Activated naive CD4-positive, alpha-beta T cell treated with anti-CD3 and anti-CD28 coated beads, Interleukin-2, amount 10 ng/mL, durations not matched to agents 7 days and 5 days (primary cell): ENCODE measurements at regions of chr17 and their contacts with region 1.

Region 1: GRCh38 chr17:79045842-79046196 is 21.9 kb downstream of the C1QTNF1 start:
- DNase-seq: peak; percentile 74
- H3K4me3 Mint-ChIP-seq: no peak overlapping the region
- H3K27ac Mint-ChIP-seq: no peak overlapping the region
- H3K4me1 Mint-ChIP-seq: no peaks in the 10 kb centered on the region
- H3K27me3 Mint-ChIP-seq: peaks cover 22% of the 10 kb centered on the region

Region 2: DNA sequence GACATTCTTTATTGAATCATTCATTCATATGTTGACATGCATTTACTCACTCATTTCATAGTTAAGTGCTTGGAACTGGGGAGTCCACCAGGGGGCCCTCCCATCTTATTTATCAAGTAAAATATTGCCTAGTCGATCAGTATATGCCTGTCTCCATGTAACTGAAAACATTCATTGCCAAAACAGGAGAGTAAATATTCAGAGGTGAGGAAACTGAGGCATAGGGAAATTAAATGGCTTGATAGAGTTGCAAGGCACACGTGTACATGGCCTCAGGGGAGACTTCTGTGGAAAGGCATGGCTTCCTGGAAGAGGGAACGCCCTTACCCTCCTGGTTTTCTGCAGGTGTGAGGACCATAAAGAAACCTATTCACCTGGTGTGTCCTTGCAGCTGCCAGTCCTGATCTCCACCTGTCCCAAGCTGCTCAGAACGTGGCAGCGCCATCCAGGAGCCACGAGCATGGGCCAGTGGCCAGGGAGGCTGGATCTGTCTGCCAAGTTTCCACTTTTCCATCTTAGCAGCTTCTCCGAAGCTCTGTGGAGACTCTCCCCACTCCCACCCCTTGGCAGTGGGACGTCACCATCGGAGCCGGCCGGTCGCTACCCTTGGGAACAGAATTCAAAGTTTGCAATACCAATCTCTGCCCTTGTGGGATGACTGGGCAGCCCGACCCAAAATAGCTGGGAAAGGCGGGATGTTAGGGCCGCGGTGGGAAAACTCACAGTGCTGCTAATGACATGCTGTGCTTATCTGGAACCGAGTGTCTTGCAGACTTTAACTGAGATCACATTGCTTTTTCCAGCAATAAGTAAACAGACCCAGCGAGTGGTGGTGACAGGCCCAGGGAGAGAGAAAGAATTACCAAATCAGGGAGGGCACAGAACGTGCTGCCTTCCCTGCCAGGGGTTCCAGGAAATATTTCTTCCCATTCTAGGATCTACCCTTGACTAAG is 25.9 kb before region 1 on chr17:
- CTCF ChIA-PET with region 1: interaction called, 28 read pairs
- DNase-seq: peak; percentile 75
- H3K4me3 Mint-ChIP-seq: no peak overlapping the region
- H3K27ac Mint-ChIP-seq: no peak overlapping the region
- H3K4me1 Mint-ChIP-seq: peaks cover 13% of the 10 kb centered on the region
- H3K27me3 Mint-ChIP-seq: peaks cover 65% of the 10 kb centered on the region

Region 3: DNA sequence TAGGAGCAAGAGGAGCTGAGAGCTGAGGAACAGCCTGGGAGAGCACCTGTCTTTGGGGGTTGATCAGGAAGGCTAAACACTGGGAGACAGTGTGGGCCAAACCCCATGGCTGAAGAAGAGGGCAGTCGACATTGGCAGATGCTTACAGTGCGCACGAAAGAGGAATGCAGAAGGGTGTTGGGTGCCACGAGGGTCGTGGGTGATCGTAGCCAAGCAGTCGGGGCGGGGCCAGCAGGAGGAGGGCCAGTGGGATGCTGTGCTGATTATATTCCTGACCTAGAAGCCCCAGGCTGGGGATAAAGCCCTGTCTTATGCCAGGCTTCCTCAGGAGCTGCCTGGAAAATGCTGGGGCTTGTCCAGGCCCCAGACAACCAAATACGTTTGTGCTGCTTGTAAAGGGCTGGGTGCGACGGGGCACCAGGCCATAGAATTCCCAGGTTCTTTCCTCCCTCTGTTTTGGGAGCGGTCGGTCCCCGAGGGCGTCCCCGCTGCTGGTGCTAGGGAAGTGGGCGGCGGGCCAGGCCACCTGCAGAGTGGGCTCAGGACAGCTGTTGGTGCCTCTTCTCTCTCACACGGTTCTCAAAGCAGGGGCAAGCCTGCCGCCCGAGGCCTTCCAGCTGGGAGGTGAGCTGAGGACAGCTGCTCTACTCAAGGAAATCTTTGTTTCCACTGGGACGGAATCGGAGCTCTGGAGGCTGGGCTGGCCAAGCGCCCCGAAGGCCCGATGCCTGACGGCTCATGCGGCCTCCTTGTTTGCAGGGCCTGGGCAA is 11.9 kb before region 1 on chr17:
- CTCF ChIA-PET with region 1: interaction called, 15 read pairs
- DNase-seq: no peak
- H3K4me3 Mint-ChIP-seq: no peak overlapping the region
- H3K27ac Mint-ChIP-seq: no peak overlapping the region
- H3K4me1 Mint-ChIP-seq: no peaks in the 10 kb centered on the region
- H3K27me3 Mint-ChIP-seq: peaks cover 45% of the 10 kb centered on the region